CD14-positive monocyte (primary cell): ENCODE measurements at regions of chr1 and their contacts with region 1.

Region 1: GRCh38 chr1:1841575-1841995 is 49.3 kb downstream of the GNB1 start:
- DNase-seq: peak; percentile 6 to 27 (median 12)
- H3K4me3 ChIP-seq: peak overlapping the region in 1 of 3 experiments; percentile 11
- H3K4me3 Mint-ChIP-seq: peak overlapping the region; percentile 55 to 68
- H3K27ac ChIP-seq: peak overlapping the region; percentile 36 to 74
- H3K27ac Mint-ChIP-seq: peak overlapping the region; percentile 48 to 91 (median 74)
- H3K4me1 ChIP-seq: peaks cover 24 to 29% of the 10 kb centered on the region in 2 donors
- H3K4me1 Mint-ChIP-seq: peaks cover 43% of the 10 kb centered on the region
- H3K27me3 ChIP-seq: no peaks in the 10 kb centered on the region
- H3K27me3 Mint-ChIP-seq: no peaks in the 10 kb centered on the region
- CTCF ChIP-seq: no peak

Region 2: GRCh38 chr1:1890506-1891348 is 49.1 kb after region 1 on chr1 and contains the start of gene GNB1:
- intact Hi-C with region 1: loop called in 1 of 2 experiments (anchors 10 kb)
- DNase-seq: peak; percentile 85 to 92 (median 89)
- H3K4me3 ChIP-seq: peak within 1 kb of the TSS; percentile 76 to 98 (median 89)
- H3K4me3 Mint-ChIP-seq: peak within 1 kb of the TSS; percentile 87 to 89
- H3K27ac ChIP-seq: peak within 1 kb of the TSS; percentile 76 to 91
- H3K27ac Mint-ChIP-seq: peak within 1 kb of the TSS; percentile 83 to 93 (median 88)
- H3K4me1 ChIP-seq: peaks cover 34 to 45% of the 10 kb centered on the region in 2 donors
- H3K4me1 Mint-ChIP-seq: peaks cover 53% of the 10 kb centered on the region
- H3K27me3 ChIP-seq: peaks cover 0 to 6% of the 10 kb centered on the region in 2 donors
- H3K27me3 Mint-ChIP-seq: peaks cover 9 to 18% (median 16%) of the 10 kb centered on the region in 3 donors
- CTCF ChIP-seq: no peak
- polyA plus RNA-seq, gene GNB1: 41.9 to 357 (median 111) TPM